Panc1 (cell line): ENCODE measurements at regions of chr12 and their contacts with region 1.

Region 1: DNA sequence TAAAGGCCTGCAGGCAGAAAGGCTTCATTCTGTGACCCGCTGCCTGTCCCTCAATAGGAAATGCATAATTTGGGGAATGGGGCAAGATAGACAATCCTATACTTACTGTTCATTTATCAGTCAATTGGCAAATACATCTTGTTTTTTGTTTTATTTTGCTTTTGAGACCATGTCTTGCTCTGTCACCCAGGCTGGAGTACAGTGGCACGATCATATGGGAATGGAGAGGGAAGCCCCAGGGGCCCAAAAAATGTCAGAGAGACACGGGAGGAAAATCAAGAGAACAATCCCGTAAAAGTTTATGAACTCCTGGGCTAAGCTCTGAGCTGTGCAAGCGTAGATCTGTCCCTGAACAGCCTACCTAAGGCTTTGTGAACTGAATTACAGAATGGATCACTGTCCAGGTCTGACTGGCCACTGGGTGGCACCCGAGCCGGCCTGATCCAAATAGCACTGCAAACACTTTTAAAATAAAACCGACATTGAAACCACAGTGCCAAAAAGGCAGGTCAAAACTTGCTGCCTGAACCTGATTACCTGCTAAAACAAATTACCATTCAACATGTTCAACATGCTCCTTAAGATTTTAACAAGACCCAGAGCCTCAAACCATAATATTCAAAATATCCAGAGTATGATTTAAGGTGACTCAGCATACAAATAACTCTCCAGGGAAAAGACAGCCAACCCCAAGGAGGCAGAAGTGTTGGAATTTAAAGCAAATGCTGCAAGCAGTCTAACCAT is 11.8 kb downstream of the COPS7A start:
- DNase-seq: peak; percentile 32
- ATAC-seq: peak; percentile 100
- H3K4me3 ChIP-seq: no peak overlapping the region
- H3K27ac ChIP-seq: peak overlapping the region; percentile 66
- H3K4me1 ChIP-seq: peaks cover 7% of the 10 kb centered on the region; the same call in 1 of the 2 replicates
- H3K27me3 ChIP-seq: no peaks in the 10 kb centered on the region
- CTCF ChIP-seq: peak; percentile 85

Region 2: GRCh38 chr12:6667627-6668100 is 68.0 kb before region 1 on chr12:
- CTCF ChIA-PET with region 1: no interaction called
- POLR2A ChIA-PET with region 1: no interaction called
- in situ Hi-C with region 1: no loop called
- intact Hi-C with region 1: no loop called
- DNase-seq: no peak
- ATAC-seq: no peak
- H3K4me3 ChIP-seq: no peak overlapping the region
- H3K27ac ChIP-seq: no peak overlapping the region
- H3K4me1 ChIP-seq: no peaks in the 10 kb centered on the region
- H3K27me3 ChIP-seq: no peaks in the 10 kb centered on the region
- CTCF ChIP-seq: no peak; the same call in 1 of the 2 replicates

Region 3: DNA sequence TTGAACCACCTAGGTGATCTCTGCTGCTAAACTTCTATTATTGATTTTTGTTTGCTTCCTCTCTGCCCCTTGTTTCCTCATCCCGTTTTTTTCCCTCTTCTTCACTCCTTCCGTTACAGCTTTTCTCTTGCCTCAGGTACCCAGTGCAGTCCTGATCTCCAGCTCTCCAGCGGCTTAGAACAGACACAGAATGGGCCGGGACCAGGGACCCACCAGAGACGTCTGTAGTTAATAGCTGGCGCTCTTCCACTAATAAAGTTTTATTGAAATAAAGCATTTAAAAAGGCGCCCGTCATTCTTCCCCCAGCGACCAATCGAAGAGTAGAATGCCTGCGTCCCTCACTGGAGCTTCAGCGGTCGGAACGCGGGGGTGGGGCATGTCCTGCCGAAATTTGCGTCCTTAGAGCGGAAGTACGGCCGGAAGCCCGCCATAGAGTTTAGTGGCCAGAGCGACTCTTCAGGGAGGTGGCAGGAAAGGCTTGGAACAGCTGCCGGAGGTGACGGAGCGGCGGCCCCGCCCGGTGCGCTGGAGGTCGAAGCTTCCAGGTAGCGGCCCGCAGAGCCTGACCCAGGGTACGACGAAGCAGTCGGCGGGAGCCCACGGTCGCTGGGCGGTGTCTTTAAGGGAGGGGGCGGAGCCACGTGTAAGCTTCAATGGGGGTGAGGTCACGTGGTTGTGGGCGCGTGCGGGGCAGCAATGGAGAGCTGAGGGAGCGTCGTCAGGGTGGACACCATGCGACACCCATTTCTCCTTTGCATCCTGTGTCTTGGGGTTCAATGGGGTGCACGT is 11.8 kb before region 1 on chr12 and contains the start of gene COPS7A:
- CTCF ChIA-PET with region 1: no interaction called
- POLR2A ChIA-PET with region 1: no interaction called
- in situ Hi-C with region 1: no loop called
- intact Hi-C with region 1: no loop called
- DNase-seq: peak; percentile 89
- ATAC-seq: peak; percentile 98
- H3K4me3 ChIP-seq: peak within 1 kb of the TSS; percentile 57 to 80
- H3K27ac ChIP-seq: peak within 1 kb of the TSS; percentile 94
- H3K4me1 ChIP-seq: peaks cover 3% of the 10 kb centered on the region; the same call in 1 of the 2 replicates
- H3K27me3 ChIP-seq: no peaks in the 10 kb centered on the region
- CTCF ChIP-seq: no peak
- total RNA-seq, gene COPS7A: 37.5 TPM

Region 4: GRCh38 chr12:6799147-6799546 is 63.5 kb after region 1 on chr12:
- CTCF ChIA-PET with region 1: no interaction called
- POLR2A ChIA-PET with region 1: interaction called, 14 read pairs
- in situ Hi-C with region 1: no loop called
- intact Hi-C with region 1: no loop called
- DNase-seq: no peak
- ATAC-seq: no peak
- H3K4me3 ChIP-seq: no peak overlapping the region
- H3K27ac ChIP-seq: no peak overlapping the region
- H3K4me1 ChIP-seq: no peaks in the 10 kb centered on the region
- H3K27me3 ChIP-seq: no peaks in the 10 kb centered on the region
- CTCF ChIP-seq: no peak

Region 5: DNA sequence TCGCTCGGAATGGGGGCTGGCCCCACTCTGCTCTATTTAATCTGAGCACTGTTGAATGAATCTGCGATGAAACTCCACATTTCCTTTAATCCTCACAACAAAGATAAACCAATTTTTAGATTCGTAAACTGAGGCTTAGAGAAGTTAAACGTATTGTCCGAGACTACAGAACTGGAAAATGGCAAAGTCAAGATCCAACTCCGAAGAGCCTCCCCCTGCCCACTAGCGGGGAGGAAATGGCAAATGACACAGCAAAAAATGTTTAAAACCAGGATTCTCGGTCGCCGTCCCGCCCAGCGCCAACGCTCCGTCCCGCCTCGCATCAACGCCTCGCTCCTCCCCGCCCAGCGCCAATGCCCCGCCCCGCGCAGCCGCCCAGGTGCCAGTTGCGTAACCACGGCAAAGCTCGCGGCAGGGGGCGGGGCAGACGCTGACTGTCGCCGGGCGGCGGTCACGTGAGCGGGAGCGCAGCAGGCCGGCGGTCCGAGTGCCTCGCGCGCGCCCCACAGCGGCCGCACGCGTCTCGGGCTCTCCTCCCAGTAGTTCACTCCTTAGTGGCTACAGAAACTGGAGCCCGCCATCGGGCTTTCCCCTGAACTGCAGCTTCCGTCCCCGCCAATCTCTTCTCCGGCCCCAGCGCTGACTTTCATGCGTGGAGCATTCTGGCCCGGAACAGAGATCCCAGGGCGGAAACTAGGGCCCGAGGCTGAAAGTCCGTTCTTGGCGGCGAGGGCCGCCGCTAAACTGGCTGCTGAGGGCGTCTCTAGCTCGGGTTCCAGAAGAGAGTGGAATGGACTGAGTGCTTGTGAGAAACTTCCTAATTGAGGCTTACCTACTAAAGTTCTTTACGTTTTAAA is 155.4 kb after region 1 on chr12:
- CTCF ChIA-PET with region 1: no interaction called
- POLR2A ChIA-PET with region 1: no interaction called
- in situ Hi-C with region 1: no loop called
- intact Hi-C with region 1: no loop called
- DNase-seq: no peak
- ATAC-seq: peak; percentile 98
- H3K4me3 ChIP-seq: peak overlapping the region; percentile 49 to 76
- H3K27ac ChIP-seq: peak overlapping the region; percentile 95
- H3K4me1 ChIP-seq: 0 out of 2 replicates have a peak, but pooled peaks cover 4% of the 10 kb centered on the region
- H3K27me3 ChIP-seq: no peaks in the 10 kb centered on the region
- CTCF ChIP-seq: peak; percentile 93